ENCODE measurements at regions of chr3 and their contacts with region 1.

Region 1: DNA sequence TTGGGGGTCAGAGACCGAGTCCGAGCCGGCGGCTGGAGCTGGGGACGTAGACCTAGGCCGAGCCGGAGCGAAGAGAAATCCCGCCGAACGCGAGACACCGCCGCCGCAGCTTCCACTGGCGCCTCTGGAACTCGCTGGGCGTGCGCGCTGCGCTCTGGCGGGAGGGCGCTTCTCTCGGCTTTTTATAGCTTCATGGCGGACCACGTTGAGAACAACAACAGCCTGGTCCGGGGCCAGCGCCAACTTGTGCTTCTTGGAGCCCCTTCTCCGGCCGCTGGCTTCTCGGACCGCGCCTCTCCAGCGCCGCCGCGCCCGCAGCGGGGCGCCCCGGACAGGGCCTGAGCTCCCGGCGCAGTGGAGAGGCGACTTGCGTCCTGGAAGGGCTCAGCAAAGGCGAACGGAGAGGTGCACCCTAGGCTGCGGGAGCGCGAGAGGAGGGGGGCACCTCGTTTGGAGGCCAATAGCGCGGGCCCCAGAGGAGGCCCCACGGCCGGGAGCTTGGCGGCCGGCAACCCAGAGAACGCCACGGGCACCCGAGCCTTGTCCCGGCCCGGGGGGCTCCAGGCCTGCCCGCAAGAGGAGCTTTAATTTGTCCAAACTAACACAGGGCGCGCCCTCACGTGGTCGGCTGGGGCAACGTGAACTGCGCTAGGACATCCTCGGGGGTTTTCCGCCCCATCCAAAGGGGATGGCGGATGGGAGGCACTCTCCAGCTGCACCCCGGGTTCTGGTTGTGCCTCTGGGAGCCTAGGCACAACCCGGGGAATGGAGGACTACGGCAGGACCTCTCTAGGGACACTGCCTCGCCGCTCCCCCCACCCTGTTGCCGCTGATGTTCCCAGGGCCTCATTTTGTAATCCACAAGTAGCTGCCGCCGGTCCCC is 37.7 kb downstream of the HMCES start:
- DNase-seq: peak; percentile 90
- H3K4me3 Mint-ChIP-seq: peak overlapping the region; percentile 95
- H3K27ac Mint-ChIP-seq: peak overlapping the region; percentile 79
- H3K4me1 Mint-ChIP-seq: peaks cover 34% of the 10 kb centered on the region
- H3K27me3 Mint-ChIP-seq: no peaks in the 10 kb centered on the region

Region 2: GRCh38 chr3:128879125-128879969 is 437.0 kb before region 1 on chr3 and contains the start of gene ACAD9:
- CTCF ChIA-PET with region 1: interaction called, 3 read pairs
- POLR2A ChIA-PET with region 1: interaction called, 28 read pairs
- DNase-seq: peak; percentile 98
- H3K4me3 Mint-ChIP-seq: peak within 1 kb of the TSS; percentile 85
- H3K27ac Mint-ChIP-seq: peak within 1 kb of the TSS; percentile 86
- H3K4me1 Mint-ChIP-seq: peaks cover 64% of the 10 kb centered on the region
- H3K27me3 Mint-ChIP-seq: peaks cover 3% of the 10 kb centered on the region
- total RNA-seq, gene ACAD9: 42.7 to 48.4 TPM

Region 3: GRCh38 chr3:129120254-129121004 is 195.9 kb before region 1 on chr3:
- CTCF ChIA-PET with region 1: interaction called, 4 read pairs
- POLR2A ChIA-PET with region 1: interaction called, 106 read pairs
- DNase-seq: peak; percentile 96
- H3K4me3 Mint-ChIP-seq: peak overlapping the region; percentile 91
- H3K27ac Mint-ChIP-seq: peak overlapping the region; percentile 96
- H3K4me1 Mint-ChIP-seq: peaks cover 53% of the 10 kb centered on the region
- H3K27me3 Mint-ChIP-seq: no peaks in the 10 kb centered on the region

Region 4: GRCh38 chr3:129238945-129239706 is 77.2 kb before region 1 on chr3:
- CTCF ChIA-PET with region 1: interaction called, 3 read pairs
- POLR2A ChIA-PET with region 1: interaction called, 24 read pairs
- DNase-seq: peak; percentile 64
- H3K4me3 Mint-ChIP-seq: peak overlapping the region; percentile 59
- H3K27ac Mint-ChIP-seq: peak overlapping the region; percentile 97
- H3K4me1 Mint-ChIP-seq: peaks cover 59% of the 10 kb centered on the region
- H3K27me3 Mint-ChIP-seq: no peaks in the 10 kb centered on the region

Region 5: GRCh38 chr3:129305592-129306091 is 10.7 kb before region 1 on chr3:
- CTCF ChIA-PET with region 1: interaction called, 8 read pairs
- POLR2A ChIA-PET with region 1: interaction called, 103 read pairs
- DNase-seq: no peak
- H3K4me3 Mint-ChIP-seq: no peak overlapping the region
- H3K27ac Mint-ChIP-seq: no peak overlapping the region
- H3K4me1 Mint-ChIP-seq: peaks cover 29% of the 10 kb centered on the region
- H3K27me3 Mint-ChIP-seq: no peaks in the 10 kb centered on the region

Region 6: DNA sequence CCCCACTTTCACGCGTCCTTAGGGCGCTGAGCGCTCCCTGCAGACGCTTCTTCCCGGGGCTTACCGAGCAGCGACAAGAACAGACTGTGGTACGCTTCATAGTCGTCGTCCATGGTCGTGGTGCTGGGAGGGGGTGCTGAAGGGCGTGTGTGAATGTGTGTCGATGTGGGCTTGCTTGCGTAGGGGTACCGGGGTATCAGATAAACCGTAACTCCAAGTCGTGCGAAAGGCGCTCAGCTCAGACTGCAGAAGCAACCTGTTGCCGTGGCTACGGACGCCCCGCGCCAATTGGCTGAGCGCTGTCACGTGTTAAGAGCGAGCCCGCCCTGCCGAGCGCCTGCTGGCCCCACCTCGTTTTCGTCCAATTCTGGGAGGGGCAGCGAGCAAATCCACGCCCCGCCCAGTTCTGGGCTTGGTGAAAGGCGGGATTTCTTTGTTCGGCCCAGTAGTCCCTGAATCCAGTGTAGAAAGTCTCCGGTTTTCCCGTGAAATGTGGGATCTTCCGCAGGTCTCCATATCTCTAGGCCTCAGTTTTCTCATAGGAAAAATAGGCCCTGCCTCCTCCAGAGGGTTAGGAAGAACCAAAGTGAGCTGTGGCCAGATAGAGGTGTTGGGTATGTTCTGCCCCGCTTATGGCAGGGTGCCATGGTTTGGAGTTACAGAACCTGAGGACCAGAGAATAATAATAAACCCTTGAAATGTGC is 112.2 kb after region 1 on chr3 and contains the start of gene EFCAB12:
- CTCF ChIA-PET with region 1: no interaction called
- POLR2A ChIA-PET with region 1: interaction called, 14 read pairs
- DNase-seq: peak; percentile 91
- H3K4me3 Mint-ChIP-seq: peak within 1 kb of the TSS; percentile 22
- H3K27ac Mint-ChIP-seq: no peak within 1 kb of the TSS
- H3K4me1 Mint-ChIP-seq: peaks cover 50% of the 10 kb centered on the region
- H3K27me3 Mint-ChIP-seq: peaks cover 5% of the 10 kb centered on the region
- total RNA-seq, gene EFCAB12: 0.65 to 0.98 TPM

Measured in activated CD4-positive, alpha-beta memory T cell treated with anti-CD3 and anti-CD28 coated beads, Interleukin-2, amount 10 ng/mL, durations not matched to agents 7 days and 5 days (primary cell).